Heart right ventricle (tissue), 16 donors: ENCODE measurements at regions of chr2 and their contacts with region 1.

Region 1: GRCh38 chr2:148989882-148990493 is 48.5 kb upstream of the LYPD6B start:
- DNase-seq: peak in 1 of 2 donors; percentile 72
- ATAC-seq: peak; percentile 57 to 92 (median 72)
- H3K4me3 ChIP-seq: no peak overlapping the region
- H3K27ac ChIP-seq: no peak overlapping the region
- H3K4me1 ChIP-seq: no peaks in the 10 kb centered on the region
- H3K27me3 ChIP-seq: no peaks in the 10 kb centered on the region
- CTCF ChIP-seq: peak; percentile 47 to 84 (median 77)

Region 2: GRCh38 chr2:147937744-147938349 is 1052.1 kb before region 1 on chr2:
- intact Hi-C with region 1: loop called (anchors 5 to 10 kb)
- DNase-seq: no peak
- ATAC-seq: peak in 4 of 8 donors; percentile 44 to 62 (median 51)
- H3K4me3 ChIP-seq: no peak overlapping the region
- H3K27ac ChIP-seq: no peak overlapping the region
- H3K4me1 ChIP-seq: peaks cover 0 to 4% (median 0%) of the 10 kb centered on the region in 9 donors
- H3K27me3 ChIP-seq: no peaks in the 10 kb centered on the region
- CTCF ChIP-seq: peak; percentile 64 to 93 (median 90)

Region 3: GRCh38 chr2:147989809-147990403 is 1000.1 kb before region 1 on chr2:
- intact Hi-C with region 1: loop called in 1 of 10 experiments (anchors 10 kb)
- DNase-seq: no peak
- ATAC-seq: peak in 6 of 8 donors; percentile 38 to 64 (median 48)
- H3K4me3 ChIP-seq: no peak overlapping the region
- H3K27ac ChIP-seq: no peak overlapping the region
- H3K4me1 ChIP-seq: peaks cover 0 to 10% (median 0%) of the 10 kb centered on the region in 9 donors
- H3K27me3 ChIP-seq: no peaks in the 10 kb centered on the region
- CTCF ChIP-seq: peak in 8 of 9 donors; percentile 24 to 77 (median 68)

Region 4: DNA sequence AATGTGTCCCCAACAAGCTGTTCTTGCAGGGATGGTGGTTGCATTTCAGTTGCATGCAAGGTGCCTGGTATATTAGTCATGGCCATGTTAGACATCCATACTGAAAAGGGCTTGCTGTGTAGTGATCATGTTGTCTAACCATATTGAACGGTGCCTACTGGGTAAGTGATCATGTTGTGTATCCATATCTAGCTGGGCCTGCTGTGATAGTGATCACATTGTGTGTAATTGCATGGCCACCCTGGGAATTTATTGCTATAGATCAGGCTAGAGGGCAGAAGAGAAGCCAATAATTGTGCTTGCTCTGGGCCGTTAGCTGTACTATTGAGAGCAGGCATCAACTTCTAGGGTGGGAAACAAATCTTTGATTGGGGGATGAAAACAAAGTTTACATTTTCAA is 355.2 kb before region 1 on chr2:
- intact Hi-C with region 1: loop called in 2 of 10 experiments (anchors 5 to 10 kb)
- DNase-seq: no peak
- ATAC-seq: no peak
- H3K4me3 ChIP-seq: no peak overlapping the region
- H3K27ac ChIP-seq: no peak overlapping the region
- H3K4me1 ChIP-seq: no peaks in the 10 kb centered on the region
- H3K27me3 ChIP-seq: no peaks in the 10 kb centered on the region
- CTCF ChIP-seq: no peak

Region 5: GRCh38 chr2:149080946-149081345 is 91.0 kb after region 1 on chr2:
- intact Hi-C with region 1: no loop called
- DNase-seq: no peak
- ATAC-seq: no peak
- H3K4me3 ChIP-seq: no peak overlapping the region
- H3K27ac ChIP-seq: no peak overlapping the region
- H3K4me1 ChIP-seq: peaks cover 0 to 13% (median 0%) of the 10 kb centered on the region in 9 donors
- H3K27me3 ChIP-seq: peaks cover 0 to 3% (median 0%) of the 10 kb centered on the region in 7 donors
- CTCF ChIP-seq: no peak